GM23248 (cell line): ENCODE measurements at regions of chr9 and their contacts with region 1.

Region 1: DNA sequence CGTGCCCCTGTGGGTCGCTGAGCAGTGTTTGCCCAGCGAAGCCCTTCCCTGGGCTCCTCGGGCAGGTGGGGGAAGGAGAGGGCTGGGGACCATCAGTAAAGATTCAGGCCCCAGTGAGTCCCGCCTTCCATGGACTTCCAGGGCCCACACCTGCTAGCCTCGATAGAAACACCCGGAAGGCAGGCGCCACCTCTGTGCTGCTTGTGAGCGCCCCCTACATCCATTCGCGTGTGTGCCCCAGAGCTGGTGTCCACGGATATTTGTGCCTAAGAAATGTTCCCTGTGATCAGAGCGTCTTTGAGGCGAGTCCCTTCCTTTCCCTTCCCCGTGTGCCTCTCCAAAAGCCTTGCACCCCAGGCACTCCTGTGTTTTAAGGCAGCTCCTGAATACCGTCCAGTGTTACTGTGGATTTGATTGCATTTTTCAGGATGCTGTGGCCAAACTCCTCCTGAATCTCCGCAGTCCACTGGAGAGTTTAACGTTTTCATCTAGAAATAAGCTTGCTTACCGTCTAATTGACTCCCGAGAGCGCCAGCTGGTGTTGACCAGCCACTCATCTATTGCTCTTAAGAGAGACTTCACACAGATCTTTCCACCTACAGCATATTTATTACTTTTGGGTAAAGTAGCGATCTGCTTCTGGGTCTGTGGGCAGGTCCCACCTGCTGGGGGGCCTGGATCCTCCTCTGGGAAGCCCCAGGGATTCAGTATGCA is 101.4 kb downstream of the COL5A1 start:
- DNase-seq: no peak
- H3K4me3 ChIP-seq: no peak overlapping the region
- H3K27ac ChIP-seq: no peak overlapping the region
- H3K4me1 ChIP-seq: no peaks in the 10 kb centered on the region
- H3K27me3 ChIP-seq: no peaks in the 10 kb centered on the region

Region 2: DNA sequence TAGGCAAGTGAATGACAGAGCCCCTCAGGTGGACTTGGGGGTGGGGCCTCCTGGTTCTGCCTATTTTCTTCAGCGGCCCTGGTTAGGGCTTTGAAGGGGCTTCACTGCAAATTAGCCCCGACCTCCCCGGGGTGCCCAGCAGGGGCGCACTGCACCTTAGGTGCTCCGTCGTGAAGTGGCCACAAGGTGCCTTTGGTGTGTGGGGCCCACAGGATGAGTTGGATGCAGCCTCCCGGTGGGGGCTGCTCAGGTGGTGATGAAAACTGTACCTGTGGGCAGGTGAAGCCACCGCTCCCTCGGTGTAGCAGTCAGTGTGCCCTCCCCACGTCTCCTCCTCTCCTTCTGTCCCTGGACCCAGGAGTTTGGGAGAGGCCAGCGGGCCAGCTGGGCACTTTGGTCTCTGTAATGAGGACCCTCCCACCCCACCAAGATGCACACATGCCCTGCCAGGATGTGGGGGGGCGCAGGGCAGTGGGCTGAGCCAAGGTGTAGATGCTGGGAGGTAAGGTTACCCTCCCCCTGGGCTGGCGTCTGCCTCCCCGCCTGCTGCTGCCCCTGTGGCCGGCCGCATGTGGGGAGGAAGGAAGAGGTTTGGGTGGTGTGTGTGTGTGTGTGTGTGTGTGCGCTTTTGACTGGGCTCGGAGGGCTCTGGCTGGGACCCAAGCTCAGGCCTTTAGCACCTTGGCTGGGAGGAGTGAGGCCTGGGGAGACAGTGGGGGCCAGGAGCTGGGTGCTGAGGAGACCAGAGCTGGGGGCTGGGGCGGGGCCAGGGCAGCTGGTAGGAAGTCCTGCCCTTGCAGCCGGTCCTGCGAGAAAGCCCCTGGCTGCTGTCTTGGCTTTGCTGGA is 361.1 kb before region 1 on chr9:
- in situ Hi-C with region 1: no loop called
- DNase-seq: no peak
- H3K4me3 ChIP-seq: no peak overlapping the region
- H3K27ac ChIP-seq: no peak overlapping the region
- H3K4me1 ChIP-seq: peaks cover 15% of the 10 kb centered on the region
- H3K27me3 ChIP-seq: no peaks in the 10 kb centered on the region

Region 3: DNA sequence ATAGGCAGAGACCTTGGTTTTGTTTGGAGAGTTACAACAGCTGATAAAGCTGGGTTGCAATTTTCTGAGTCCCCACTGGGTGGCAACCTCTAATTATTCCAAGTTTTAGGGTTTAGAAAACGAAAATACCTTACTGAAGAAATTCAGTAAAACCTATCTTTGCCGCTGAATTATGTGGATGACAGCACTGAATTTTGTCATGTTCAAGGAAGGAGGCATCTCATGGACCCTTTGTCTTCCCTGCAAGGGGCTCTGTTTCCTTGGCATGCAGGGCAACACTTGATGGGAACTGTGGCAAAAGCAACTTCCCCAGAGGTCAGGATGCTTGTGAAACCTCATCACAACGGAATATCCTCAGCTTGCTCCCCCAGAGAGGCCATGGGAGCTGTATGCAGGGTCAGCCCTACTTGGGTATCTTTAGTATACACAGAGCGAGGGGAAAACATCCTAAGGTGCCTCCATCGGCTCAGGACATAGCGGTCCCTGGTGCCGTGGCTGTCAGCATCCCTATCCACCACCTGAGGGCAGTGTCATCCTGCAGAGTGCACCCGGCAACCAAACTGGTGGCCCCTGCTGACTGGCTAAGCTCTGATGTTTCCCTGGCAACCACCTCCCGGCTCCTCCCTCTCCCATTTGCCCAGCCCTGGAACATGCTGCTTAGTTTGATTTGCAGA is 293.6 kb before region 1 on chr9:
- in situ Hi-C with region 1: loop called (anchors 10 kb)
- DNase-seq: peak; percentile 98
- H3K4me3 ChIP-seq: no peak overlapping the region
- H3K27ac ChIP-seq: no peak overlapping the region
- H3K4me1 ChIP-seq: no peaks in the 10 kb centered on the region
- H3K27me3 ChIP-seq: no peaks in the 10 kb centered on the region